SK-N-SH (cell line): ENCODE measurements at regions of chr17 and their contacts with region 1.

Region 1: GRCh38 chr17:47889734-47890529 is 6.1 kb upstream of the SP2 start:
- DNase-seq: peak; percentile 85
- H3K4me3 ChIP-seq: no peak overlapping the region; a peak in 1 of 4 replicates
- H3K27ac ChIP-seq: no peak overlapping the region
- H3K4me1 ChIP-seq: peaks cover 4% of the 10 kb centered on the region in 2 experiments; a peak in 3 of 4 replicates
- H3K27me3 ChIP-seq: no peaks in the 10 kb centered on the region
- CTCF ChIP-seq: peak; percentile 100
- EP300 ChIP-seq: no peak
- RAD21 ChIP-seq: peak; percentile 99

Region 2: DNA sequence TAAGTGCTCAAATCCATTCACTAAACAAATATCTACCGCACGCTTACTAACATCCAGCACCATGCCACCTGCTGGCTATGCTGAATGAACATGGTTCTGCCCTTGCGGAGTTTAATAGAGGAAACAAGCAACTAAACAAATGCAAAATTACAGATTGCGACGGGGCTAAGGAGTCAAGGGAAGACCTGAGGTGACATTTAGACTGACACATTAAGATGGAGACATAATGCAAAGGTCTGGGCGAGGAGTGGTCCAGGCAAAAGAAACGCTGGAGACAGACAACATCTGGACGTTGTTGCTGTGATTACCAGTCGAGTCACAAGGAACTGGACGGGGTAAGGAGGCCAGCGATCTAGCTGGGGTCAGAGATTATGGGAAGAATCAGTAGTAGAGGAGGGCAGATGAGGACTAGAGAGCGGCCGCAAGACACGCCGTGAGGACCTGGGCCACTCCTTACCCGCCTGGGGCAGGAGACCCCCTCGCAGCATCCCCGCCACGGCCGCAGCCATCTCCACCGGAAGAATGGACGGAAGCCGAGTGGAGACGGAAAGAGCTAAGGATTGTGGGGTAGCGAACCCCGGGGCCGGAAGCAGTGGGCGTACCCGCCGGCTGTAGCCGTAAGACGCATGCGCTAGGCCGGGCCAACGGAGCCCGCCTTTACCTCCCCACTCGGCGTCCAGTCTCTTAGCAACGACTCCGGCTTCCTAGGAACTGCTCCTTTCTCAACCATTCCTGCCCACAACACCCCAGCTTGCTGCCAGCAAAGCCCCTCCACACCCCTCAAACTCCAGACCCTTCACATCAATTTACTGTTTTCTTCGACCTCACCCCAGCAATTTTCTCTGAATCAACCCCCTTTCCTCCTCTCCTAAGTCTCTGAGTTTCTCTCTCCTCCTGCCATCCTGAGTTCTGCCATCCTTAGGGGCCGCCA is 58.7 kb before region 1 on chr17 and contains the starts of genes LRRC46 and MRPL10:
- CTCF ChIA-PET with region 1: interaction called, 1,447 read pairs
- POLR2A ChIA-PET with region 1: interaction called, 5 read pairs
- DNase-seq: peak; percentile 100
- H3K4me3 ChIP-seq: peak within 1 kb of the TSS; percentile 77 to 93
- H3K27ac ChIP-seq: peak within 1 kb of the TSS; percentile 76 to 88
- H3K4me1 ChIP-seq: peaks cover 9 to 15% of the 10 kb centered on the region in 2 experiments; a peak in 2 of 4 replicates
- H3K27me3 ChIP-seq: no peaks in the 10 kb centered on the region
- CTCF ChIP-seq: peak; percentile 77
- EP300 ChIP-seq: peak in 1 of 2 experiments; percentile 2; a peak in 1 of 4 replicates
- RAD21 ChIP-seq: peak; percentile 28; the same call in 1 of the 2 replicates
- polyA plus RNA-seq, gene LRRC46: 1.6 and 1.8 TPM in 2 replicates
- polyA plus RNA-seq, gene MRPL10: 133 and 136 TPM in 2 replicates

Region 3: DNA sequence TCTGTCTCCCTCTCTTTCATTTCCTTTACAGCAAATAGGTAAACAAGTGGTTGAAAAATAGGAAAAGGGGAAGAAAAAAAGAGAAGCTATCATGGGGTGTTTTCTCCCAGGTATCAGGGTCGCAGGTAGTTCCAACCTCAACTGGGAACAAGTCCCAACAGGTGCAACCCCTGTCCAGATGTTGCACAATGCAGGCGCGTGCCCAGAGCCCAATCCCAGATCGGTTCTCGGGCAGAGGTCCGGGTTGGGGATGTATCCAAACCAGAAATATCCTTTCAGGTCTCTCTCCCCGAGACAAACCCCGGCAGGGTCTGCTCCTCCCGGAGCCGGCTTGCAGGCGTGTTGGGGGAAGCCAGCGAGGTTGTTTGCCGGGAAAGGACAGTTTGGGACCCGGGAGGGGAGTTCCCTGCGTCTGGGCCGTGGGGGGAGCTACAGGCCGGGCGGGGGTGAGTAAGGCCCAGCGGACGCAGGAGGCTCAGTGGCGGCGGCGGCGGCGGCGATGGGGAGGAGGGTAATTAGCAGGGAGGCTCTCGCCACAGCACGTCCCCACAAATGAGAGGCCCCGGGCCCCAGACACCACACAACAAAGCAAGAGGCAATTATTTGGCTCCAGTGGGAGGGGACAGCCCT is 17.8 kb before region 1 on chr17:
- CTCF ChIA-PET with region 1: interaction called, 45 read pairs
- POLR2A ChIA-PET with region 1: no interaction called
- DNase-seq: no peak
- H3K4me3 ChIP-seq: no peak overlapping the region
- H3K27ac ChIP-seq: no peak overlapping the region
- H3K4me1 ChIP-seq: no peaks in the 10 kb centered on the region
- H3K27me3 ChIP-seq: peaks cover 61% of the 10 kb centered on the region
- CTCF ChIP-seq: no peak
- EP300 ChIP-seq: no peak
- RAD21 ChIP-seq: no peak

Region 4: GRCh38 chr17:47941236-47941994 is 51.5 kb after region 1 on chr17 and contains the start of gene PNPO:
- CTCF ChIA-PET with region 1: interaction called, 21 read pairs
- POLR2A ChIA-PET with region 1: interaction called, 8 read pairs
- DNase-seq: peak; percentile 98
- H3K4me3 ChIP-seq: peak within 1 kb of the TSS; percentile 76 to 78
- H3K27ac ChIP-seq: peak within 1 kb of the TSS in 1 of 2 experiments; percentile 73; a peak in 3 of 4 replicates
- H3K4me1 ChIP-seq: peaks cover 6 to 17% of the 10 kb centered on the region in 2 experiments; a peak in 3 of 4 replicates
- H3K27me3 ChIP-seq: no peaks in the 10 kb centered on the region
- CTCF ChIP-seq: no peak; the same call in 1 of the 2 replicates
- EP300 ChIP-seq: peak in 1 of 2 experiments; percentile 54; a peak in 1 of 4 replicates
- RAD21 ChIP-seq: no peak
- polyA plus RNA-seq, gene PNPO: 26.1 and 33.8 TPM in 2 replicates